Naive thymus-derived CD4-positive, alpha-beta T cell (primary cell): ENCODE measurements at regions of chrX and their contacts with region 1.

Region 1: DNA sequence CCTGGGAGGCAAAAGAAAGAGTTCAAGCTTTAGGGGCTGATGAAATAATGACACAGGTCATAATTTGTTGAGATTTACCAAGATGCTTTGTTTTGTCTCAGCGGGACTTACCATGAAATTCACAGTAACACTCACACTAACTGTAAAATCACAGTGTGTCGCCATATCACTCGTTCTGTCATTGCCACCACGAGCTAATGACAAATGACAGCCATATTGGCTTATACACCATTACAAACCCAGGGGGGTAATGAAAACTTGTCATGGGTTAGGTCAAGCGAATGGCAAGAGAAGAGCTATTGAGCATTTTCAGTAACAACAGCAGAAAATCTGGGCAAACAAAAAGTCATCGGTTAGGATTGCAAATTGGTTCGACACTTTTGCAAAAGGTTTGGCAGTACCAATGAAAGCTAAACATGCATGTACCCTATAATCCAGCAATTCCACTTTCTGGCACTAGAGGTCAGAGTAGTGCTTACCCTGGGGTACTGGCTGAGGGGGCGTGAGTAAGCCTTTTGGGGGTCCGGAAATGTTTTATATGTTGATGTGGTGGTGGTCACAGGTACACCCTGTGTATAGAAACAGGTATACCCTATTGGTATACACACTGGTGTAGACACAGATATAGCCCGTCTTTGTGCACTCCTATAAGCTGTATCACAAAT is 83.9 kb upstream of the RAI2 start:
- DNase-seq: peak in 6 of 9 donors; percentile 10 to 27 (median 22)
- ATAC-seq: peak; percentile 41
- H3K4me3 ChIP-seq: no peak overlapping the region
- H3K4me3 Mint-ChIP-seq: no peak overlapping the region
- H3K27ac ChIP-seq: no peak overlapping the region
- H3K27ac Mint-ChIP-seq: no peak overlapping the region
- H3K4me1 ChIP-seq: no peaks in the 10 kb centered on the region
- H3K4me1 Mint-ChIP-seq: no peaks in the 10 kb centered on the region
- H3K27me3 ChIP-seq: no peaks in the 10 kb centered on the region
- H3K27me3 Mint-ChIP-seq: peaks cover 0 to 7% (median 0%) of the 10 kb centered on the region in 5 donors

Region 2: DNA sequence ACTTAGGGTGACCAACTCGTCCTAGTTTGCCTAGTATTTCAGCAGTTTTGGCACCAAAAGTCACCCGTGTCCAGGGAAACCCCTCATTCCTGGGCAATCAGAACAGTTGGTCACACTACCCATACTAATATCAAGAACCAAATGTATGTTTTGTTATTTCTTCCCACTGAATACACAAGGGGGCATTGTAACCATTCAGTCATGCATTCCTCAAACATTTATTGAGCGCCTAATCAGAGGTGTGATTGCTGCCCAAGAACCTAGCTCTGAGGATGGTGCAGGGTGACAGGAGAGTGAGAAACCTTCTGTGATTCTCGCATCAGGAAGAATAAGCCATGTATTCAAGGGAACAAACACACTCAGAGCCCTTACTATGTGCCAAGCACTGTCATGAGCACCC is 14.1 kb before region 1 on chrX:
- CTCF ChIA-PET with region 1: no interaction called
- POLR2A ChIA-PET with region 1: no interaction called
- intact Hi-C with region 1: no loop called
- DNase-seq: no peak
- ATAC-seq: no peak
- H3K4me3 ChIP-seq: no peak overlapping the region
- H3K4me3 Mint-ChIP-seq: no peak overlapping the region
- H3K27ac ChIP-seq: no peak overlapping the region
- H3K27ac Mint-ChIP-seq: no peak overlapping the region
- H3K4me1 ChIP-seq: no peaks in the 10 kb centered on the region
- H3K4me1 Mint-ChIP-seq: no peaks in the 10 kb centered on the region
- H3K27me3 ChIP-seq: no peaks in the 10 kb centered on the region
- H3K27me3 Mint-ChIP-seq: peaks cover 0 to 4% (median 0%) of the 10 kb centered on the region in 5 donors

Region 3: DNA sequence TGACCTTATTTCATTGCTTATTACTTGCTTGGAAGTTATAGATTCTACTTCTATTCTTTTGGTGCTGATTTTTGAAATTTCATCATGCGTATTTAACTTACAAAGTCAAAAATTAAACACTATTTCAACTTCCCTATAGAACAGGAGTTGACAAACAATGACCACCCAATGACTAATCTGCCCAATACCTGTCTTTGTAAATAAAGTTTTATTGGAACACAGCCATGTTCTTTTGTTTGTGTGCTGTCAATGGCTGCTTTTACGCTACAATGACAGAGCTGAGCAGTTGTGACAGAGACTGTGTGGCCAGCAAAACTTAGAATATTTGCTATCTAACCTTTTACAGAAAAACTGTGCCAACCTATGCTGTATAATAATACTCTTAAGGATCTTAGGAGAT is 12.2 kb after region 1 on chrX:
- CTCF ChIA-PET with region 1: no interaction called
- POLR2A ChIA-PET with region 1: no interaction called
- intact Hi-C with region 1: no loop called
- DNase-seq: no peak
- ATAC-seq: no peak
- H3K4me3 ChIP-seq: no peak overlapping the region
- H3K4me3 Mint-ChIP-seq: no peak overlapping the region
- H3K27ac ChIP-seq: no peak overlapping the region
- H3K27ac Mint-ChIP-seq: no peak overlapping the region
- H3K4me1 ChIP-seq: no peaks in the 10 kb centered on the region
- H3K4me1 Mint-ChIP-seq: peaks cover 0 to 15% (median 12%) of the 10 kb centered on the region in 7 donors
- H3K27me3 ChIP-seq: no peaks in the 10 kb centered on the region
- H3K27me3 Mint-ChIP-seq: peaks cover 0 to 7% (median 3%) of the 10 kb centered on the region in 5 donors

Region 4: DNA sequence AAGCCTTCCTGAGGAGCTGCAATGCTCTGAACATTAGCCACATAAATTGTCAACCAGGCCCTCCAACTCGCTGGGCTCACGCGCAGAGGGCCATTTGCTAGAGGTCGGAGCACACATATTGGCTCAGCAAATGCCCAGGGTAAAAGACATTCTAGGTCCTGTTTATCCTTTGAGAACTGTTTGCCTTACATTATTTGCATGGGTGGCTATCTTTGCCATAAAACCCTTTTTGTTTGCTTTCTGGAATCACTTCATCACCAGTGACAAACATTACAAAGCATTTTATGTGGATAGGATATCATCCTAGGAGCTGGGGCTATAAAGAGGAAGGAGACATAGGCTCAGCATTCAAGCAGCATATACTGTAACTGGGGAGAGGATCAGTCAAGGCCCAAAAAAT is 65.3 kb after region 1 on chrX:
- CTCF ChIA-PET with region 1: no interaction called
- POLR2A ChIA-PET with region 1: no interaction called
- intact Hi-C with region 1: loop called in 1 of 2 experiments (anchors 5 kb)
- DNase-seq: no peak
- ATAC-seq: no peak
- H3K4me3 ChIP-seq: no peak overlapping the region
- H3K4me3 Mint-ChIP-seq: no peak overlapping the region
- H3K27ac ChIP-seq: no peak overlapping the region
- H3K27ac Mint-ChIP-seq: no peak overlapping the region
- H3K4me1 ChIP-seq: no peaks in the 10 kb centered on the region
- H3K4me1 Mint-ChIP-seq: no peaks in the 10 kb centered on the region
- H3K27me3 ChIP-seq: no peaks in the 10 kb centered on the region
- H3K27me3 Mint-ChIP-seq: peaks cover 0 to 2% (median 0%) of the 10 kb centered on the region in 5 donors

Region 5: DNA sequence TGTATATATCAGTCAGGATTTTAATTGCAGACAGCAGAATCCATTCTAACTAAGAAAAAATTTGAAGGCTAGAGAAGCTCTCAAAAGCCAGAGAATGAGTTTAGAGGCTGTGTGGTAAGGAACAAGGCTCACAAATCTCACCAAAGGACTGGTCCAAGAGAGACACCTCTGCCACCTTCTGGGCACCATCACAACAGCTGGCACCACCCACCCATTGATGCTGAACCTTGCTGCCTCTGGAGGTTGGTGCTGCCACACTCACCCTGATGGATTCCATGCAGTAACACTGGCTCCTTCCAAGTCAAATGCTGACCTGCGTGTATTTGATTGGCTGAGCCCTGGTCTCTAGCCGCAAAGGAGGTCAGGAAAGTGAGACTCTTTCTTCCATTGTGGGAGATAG is 174.9 kb after region 1 on chrX:
- CTCF ChIA-PET with region 1: no interaction called
- POLR2A ChIA-PET with region 1: no interaction called
- intact Hi-C with region 1: loop called in 1 of 2 experiments (anchors 1 kb)
- DNase-seq: peak in 5 of 9 donors; percentile 11 to 34 (median 16)
- ATAC-seq: no peak
- H3K4me3 ChIP-seq: no peak overlapping the region
- H3K4me3 Mint-ChIP-seq: no peak overlapping the region
- H3K27ac ChIP-seq: no peak overlapping the region
- H3K27ac Mint-ChIP-seq: no peak overlapping the region
- H3K4me1 ChIP-seq: no peaks in the 10 kb centered on the region
- H3K4me1 Mint-ChIP-seq: no peaks in the 10 kb centered on the region
- H3K27me3 ChIP-seq: no peaks in the 10 kb centered on the region
- H3K27me3 Mint-ChIP-seq: peaks cover 0 to 6% (median 5%) of the 10 kb centered on the region in 5 donors